ENCODE measurements at regions of chr2 and their contacts with region 1.

Region 1: GRCh38 chr2:132267105-132267497 is 105.3 kb upstream of the ANKRD30BL start:
- DNase-seq: no peak
- ATAC-seq: no peak
- H3K4me3 ChIP-seq: peak overlapping the region in 2 of 4 donors; percentile 26 to 55
- H3K27ac ChIP-seq: no peak overlapping the region
- H3K4me1 ChIP-seq: peaks cover 3 to 7% of the 10 kb centered on the region in 2 donors
- H3K27me3 ChIP-seq: peaks cover 7 to 16% (median 16%) of the 10 kb centered on the region in 3 donors
- CTCF ChIP-seq: no peak
- POLR2A ChIP-seq: no peak

Region 2: DNA sequence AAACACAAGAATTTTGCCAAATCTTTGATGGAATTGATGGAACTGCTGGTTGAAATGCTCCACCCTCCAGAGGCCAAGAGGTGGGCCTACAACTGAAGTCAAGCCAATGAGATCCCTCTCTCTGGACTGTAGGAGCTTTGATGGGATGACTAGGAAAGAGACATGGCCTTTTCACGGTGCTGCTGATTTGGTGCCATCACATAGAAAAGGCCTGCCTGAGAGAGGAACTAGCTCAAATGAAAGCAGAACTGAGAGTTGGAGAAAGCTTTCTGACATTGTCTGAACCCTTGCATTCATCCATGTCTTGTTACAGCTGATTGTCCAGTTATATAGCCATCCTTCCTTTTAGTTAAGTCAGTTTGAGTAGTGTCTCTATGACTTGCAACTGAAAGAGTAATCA is 686.7 kb after region 1 on chr2:
- in situ Hi-C with region 1: no loop called
- intact Hi-C with region 1: no loop called
- DNase-seq: no peak
- ATAC-seq: no peak
- H3K4me3 ChIP-seq: no peak overlapping the region
- H3K27ac ChIP-seq: no peak overlapping the region
- H3K4me1 ChIP-seq: no peaks in the 10 kb centered on the region
- H3K27me3 ChIP-seq: no peaks in the 10 kb centered on the region
- CTCF ChIP-seq: no peak
- POLR2A ChIP-seq: no peak

Region 3: DNA sequence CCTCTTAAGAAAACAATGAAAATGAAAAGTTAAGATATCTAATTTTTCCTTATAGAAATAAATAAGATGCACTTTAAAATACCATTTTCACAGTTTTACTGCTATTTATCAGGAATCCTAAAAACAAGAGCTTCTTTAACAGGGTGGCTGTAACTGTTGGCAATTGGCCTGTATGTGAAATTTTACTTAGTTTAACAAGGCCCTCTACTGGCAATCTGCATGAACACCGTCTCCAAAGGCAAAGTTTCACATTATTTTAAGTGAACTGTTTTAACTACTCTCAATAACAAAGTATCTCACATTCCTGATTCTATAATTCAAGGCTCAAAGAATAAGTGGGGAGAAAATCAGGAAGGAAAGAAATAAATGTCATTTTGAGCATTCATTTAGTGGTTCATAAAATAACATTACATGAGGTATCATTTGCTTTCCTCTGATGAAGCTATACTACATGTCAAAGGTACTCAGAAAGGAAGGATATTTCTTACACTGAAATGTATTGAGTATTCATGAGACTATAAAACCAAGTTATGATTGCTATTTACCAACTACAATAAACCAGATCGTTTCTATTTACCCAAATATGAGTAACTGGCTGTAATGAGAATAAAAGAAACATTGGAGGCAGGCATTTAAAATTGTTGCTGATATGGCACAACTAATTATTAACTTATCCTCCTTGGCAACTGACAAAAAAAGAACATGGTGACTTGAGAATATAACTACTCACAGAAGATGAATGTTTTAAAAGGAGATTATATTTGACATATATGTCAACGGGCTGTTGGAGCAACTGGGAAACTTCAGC is 1294.1 kb after region 1 on chr2:
- in situ Hi-C with region 1: no loop called
- intact Hi-C with region 1: loop called (anchors 5 kb)
- DNase-seq: no peak
- ATAC-seq: no peak
- H3K4me3 ChIP-seq: no peak overlapping the region
- H3K27ac ChIP-seq: no peak overlapping the region
- H3K4me1 ChIP-seq: no peaks in the 10 kb centered on the region
- H3K27me3 ChIP-seq: no peaks in the 10 kb centered on the region
- CTCF ChIP-seq: peak in 4 of 5 experiments; percentile 17 to 35 (median 32)
- POLR2A ChIP-seq: no peak

Measured in gastrocnemius medialis (tissue), 4 donors.